Dorsolateral prefrontal cortex (tissue), 120 donors: ENCODE measurements at regions of chr17 and their contacts with region 1.

Region 1: GRCh38 chr17:50626037-50626574 is 8.6 kb upstream of the ABCC3 start:
- DNase-seq: peak in 7 of 10 donors; percentile 36 to 74 (median 47)
- H3K4me3 ChIP-seq: no peak overlapping the region
- H3K27ac ChIP-seq: peak overlapping the region in 22 of 59 donors; percentile 1 to 70 (median 38)
- H3K27me3 ChIP-seq: peaks cover 0 to 9% (median 0%) of the 10 kb centered on the region in 45 donors
- CTCF ChIP-seq: peak in 55 of 56 donors; percentile 32 to 75 (median 65)

Region 2: DNA sequence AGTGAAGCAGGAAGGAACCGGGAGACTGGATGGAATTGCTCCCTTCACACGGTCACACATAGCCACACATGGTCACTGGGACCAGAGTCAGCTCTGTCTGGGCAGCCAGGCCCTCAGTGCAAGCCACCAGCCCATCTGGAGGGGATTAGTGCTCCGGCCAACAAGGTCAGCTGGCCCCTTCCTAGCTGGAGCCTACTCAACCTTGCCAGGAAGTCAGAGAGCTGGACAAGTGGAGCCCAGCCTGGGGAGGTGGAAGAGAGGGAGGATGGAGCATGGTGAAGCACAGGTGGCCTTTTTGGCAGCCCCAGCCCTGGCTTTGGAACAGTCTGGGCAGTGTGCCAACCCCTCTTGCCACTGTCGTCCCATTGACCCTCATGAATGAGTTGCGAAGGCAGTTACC is 69.3 kb before region 1 on chr17:
- intact Hi-C with region 1: loop called in 1 of 2 experiments (anchors 2 kb)
- DNase-seq: peak in 2 of 10 donors; percentile 39 to 98
- H3K4me3 ChIP-seq: no peak overlapping the region
- H3K27ac ChIP-seq: peak overlapping the region in 2 of 59 donors; percentile 14 to 51
- H3K27me3 ChIP-seq: peaks cover 0 to 16% (median 5%) of the 10 kb centered on the region in 45 donors
- CTCF ChIP-seq: no peak

Region 3: DNA sequence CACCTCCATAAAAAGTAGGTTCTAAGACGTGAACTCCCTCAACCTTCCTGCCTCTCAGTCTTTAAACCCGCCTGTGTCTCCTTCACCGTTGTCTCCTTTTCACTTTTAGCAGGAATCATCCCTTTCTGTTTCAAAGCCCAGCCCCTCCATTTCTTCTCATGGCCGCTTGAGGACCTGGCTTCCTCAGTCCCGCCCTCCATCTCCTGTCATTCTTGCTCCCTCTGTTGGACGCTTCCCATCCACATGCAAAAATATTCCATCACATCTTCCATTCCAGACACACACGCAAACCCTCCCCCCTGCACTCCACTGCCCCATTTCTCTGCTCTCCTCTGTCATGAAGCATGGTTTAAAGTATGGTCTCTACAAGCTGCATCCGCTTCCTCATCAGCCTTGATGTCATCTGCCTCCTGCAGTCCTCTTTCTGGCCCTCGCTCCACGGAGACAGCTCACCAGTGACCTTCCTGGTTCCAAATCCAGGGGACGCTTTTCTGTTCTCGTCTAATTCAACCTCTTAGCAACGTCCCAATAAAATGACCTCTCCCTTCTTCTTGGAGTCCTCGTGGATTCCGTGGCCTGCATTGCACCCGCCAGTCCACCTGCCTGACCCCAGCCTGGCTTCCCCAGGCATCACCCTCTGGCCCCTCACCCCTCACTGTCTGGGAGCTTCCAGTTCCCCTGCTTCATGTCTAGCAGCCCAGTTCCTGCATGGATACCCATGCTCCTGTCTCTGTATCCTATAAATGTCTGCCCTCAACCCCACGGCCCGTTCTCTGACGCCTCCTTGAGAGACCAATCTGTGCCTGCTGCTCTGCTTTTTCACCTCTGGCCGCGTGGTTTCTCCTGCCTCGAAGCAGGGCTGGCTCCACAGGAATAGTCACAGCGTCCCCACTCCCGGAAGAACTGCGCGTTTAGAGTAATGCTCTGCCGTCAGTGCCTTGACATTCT is 55.4 kb after region 1 on chr17:
- intact Hi-C with region 1: loop called in 1 of 2 experiments (anchors 5 kb)
- DNase-seq: peak in 8 of 10 donors; percentile 26 to 64 (median 51)
- H3K4me3 ChIP-seq: peak overlapping the region in 9 of 59 donors; percentile 1 to 21 (median 14)
- H3K27ac ChIP-seq: peak overlapping the region in 20 of 59 donors; percentile 4 to 66 (median 40)
- H3K27me3 ChIP-seq: no peaks in the 10 kb centered on the region
- CTCF ChIP-seq: peak in 53 of 56 donors; percentile 15 to 70 (median 46)